Thyroid gland (tissue), 4 donors: ENCODE measurements at regions of chr9 and their contacts with region 1.

Region 1: DNA sequence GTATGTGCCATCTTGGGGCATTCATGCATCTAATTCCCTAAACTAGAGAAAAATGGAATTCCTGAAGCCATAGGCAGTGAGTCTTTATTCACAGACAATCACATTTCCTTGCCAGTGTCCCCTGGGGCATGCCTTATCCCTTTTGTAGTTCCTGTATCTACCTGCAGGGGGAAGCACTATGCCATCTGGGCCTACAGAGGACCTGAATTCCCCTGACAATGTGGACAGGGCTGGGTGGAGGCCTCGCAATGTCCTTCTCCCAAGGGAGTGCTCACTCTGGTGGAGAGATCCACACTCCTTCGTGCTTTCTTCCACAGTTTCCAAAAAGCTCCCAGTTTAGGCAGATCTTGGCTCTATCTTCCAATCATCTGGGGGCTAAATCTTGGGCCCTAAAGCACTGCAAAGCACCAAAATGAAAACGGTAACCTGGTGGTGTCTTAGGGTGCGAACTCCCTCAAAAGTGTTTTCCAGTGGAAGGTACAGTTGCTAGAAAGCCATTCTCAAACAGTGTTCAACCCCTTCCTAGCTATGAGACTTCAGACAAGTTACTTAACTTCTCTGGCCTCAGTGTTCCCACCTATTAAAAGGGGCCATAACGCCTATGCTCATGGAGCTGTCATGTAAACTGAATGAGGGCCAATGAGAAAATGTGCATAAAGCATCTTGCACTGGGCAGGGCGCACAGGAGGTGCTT is 17.5 kb downstream of the WHRN start:
- DNase-seq: peak; percentile 61 to 64
- H3K4me3 ChIP-seq: no peak overlapping the region
- H3K27ac ChIP-seq: no peak overlapping the region
- H3K4me1 ChIP-seq: no peaks in the 10 kb centered on the region
- H3K27me3 ChIP-seq: no peaks in the 10 kb centered on the region
- CTCF ChIP-seq: peak; percentile 44 to 92 (median 86)
- POLR2A ChIP-seq: no peak

Region 2: DNA sequence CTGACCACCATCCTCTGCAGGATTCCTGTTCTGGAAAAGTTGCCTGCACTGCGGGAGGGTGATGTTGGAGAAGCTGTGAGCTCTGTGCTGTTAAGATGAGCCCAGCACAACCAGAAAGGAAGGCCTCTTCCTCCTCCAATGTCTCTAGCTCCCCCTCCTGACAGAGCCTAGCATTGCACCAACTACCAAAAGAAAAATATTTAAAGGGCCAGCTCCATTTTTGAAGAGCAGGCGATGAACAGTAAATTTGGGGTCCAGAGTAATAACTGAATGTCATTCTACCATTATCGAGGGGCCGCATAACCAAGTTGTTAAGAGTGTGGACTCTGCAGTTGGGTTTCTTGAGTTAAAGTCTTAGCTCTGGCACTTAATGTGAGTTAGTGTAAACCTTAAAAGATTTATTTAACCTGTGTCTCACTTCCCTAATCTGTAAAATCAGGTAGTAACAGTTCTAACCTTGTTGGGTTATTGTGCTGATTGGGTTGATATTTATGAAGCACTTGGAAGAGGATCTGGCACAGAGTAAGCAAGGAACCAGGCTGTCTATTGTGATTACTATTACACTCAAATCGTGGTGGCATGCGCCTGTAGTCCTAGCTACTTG is 165.9 kb after region 1 on chr9:
- intact Hi-C with region 1: loop called (anchors 5 kb)
- DNase-seq: peak; percentile 69 to 78
- H3K4me3 ChIP-seq: no peak overlapping the region
- H3K27ac ChIP-seq: no peak overlapping the region
- H3K4me1 ChIP-seq: peaks cover 0 to 3% of the 10 kb centered on the region in 2 donors
- H3K27me3 ChIP-seq: no peaks in the 10 kb centered on the region
- CTCF ChIP-seq: peak; percentile 53 to 96 (median 90)
- POLR2A ChIP-seq: no peak